Activated naive CD4-positive, alpha-beta T cell treated with anti-CD3 and anti-CD28 coated beads for 36 hours (primary cell): ENCODE measurements at regions of chr1 and their contacts with region 1.

Region 1: GRCh38 chr1:172380441-172381244 is 39.8 kb upstream of the C1orf105 start:
- DNase-seq: peak; percentile 68
- H3K4me3 Mint-ChIP-seq: peak overlapping the region; percentile 67
- H3K27ac Mint-ChIP-seq: peak overlapping the region; percentile 86
- H3K4me1 Mint-ChIP-seq: peaks cover 31% of the 10 kb centered on the region
- H3K27me3 Mint-ChIP-seq: no peaks in the 10 kb centered on the region

Region 2: DNA sequence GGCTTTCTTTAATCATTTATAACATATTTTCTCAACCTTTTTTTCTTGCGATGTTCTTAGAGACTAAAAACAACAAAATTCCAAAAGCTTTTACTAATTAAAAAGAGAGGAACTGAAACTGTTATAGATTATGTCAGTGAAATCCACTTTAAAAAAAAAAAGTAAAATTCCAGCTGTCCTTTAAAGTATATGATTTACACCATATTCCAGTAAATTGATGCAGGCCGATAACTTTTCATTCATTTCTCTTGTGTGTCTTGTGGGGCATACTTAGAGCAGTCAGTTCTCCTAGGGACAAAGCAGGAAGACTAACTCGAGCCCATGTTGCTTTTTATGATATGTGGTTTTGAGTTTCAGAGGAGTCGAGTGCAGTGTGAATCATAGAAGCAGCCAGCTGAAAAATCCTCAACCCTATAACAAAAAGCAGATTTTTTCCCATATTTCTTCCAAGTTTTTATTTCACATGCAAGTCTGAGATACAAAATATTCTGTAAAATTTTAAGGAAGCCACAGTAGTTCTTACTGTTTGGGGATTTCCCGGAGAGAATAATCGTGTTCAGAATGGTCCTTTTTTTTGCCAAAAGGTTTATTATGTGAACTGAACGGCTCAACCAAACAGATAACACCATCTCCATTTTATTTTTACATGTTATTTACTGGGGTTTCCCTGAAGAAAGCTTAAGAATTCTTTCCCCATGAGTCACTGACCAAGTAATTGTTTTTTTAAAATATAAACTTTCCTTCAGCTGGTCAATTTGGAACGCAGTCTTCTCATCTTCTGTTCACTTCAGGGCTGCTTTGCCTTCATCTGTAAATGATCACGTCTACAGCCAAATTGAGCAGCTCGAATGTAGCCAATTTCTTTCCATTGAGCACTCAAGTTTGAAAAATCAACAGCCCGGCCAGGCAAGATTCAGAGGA is 37.1 kb before region 1 on chr1:
- CTCF ChIA-PET with region 1: interaction called, 3 read pairs
- intact Hi-C with region 1: loop called (anchors 1 kb)
- DNase-seq: no peak
- H3K4me3 Mint-ChIP-seq: no peak overlapping the region
- H3K27ac Mint-ChIP-seq: no peak overlapping the region
- H3K4me1 Mint-ChIP-seq: peaks cover 52% of the 10 kb centered on the region
- H3K27me3 Mint-ChIP-seq: no peaks in the 10 kb centered on the region

Region 3: GRCh38 chr1:172411791-172412338 is 31.2 kb after region 1 on chr1:
- CTCF ChIA-PET with region 1: no interaction called
- intact Hi-C with region 1: loop called (anchors 1 kb)
- DNase-seq: no peak
- H3K4me3 Mint-ChIP-seq: no peak overlapping the region
- H3K27ac Mint-ChIP-seq: no peak overlapping the region
- H3K4me1 Mint-ChIP-seq: peaks cover 11% of the 10 kb centered on the region
- H3K27me3 Mint-ChIP-seq: no peaks in the 10 kb centered on the region